Colonic mucosa (tissue), 4 donors: ENCODE measurements at regions of chr21 and their contacts with region 1.

Region 1: GRCh38 chr21:31030367-31031106 is 7.7 kb downstream of the KRTAP19-8 start:
- DNase-seq: no peak
- H3K4me3 ChIP-seq: no peak overlapping the region
- H3K27ac ChIP-seq: no peak overlapping the region
- H3K4me1 ChIP-seq: no peaks in the 10 kb centered on the region
- H3K27me3 ChIP-seq: no peaks in the 10 kb centered on the region
- CTCF ChIP-seq: no peak

Region 2: GRCh38 chr21:30979054-30979453 is 51.5 kb before region 1 on chr21:
- intact Hi-C with region 1: loop called (anchors 10 kb)
- DNase-seq: no peak
- H3K4me3 ChIP-seq: no peak overlapping the region
- H3K27ac ChIP-seq: no peak overlapping the region
- H3K4me1 ChIP-seq: no peaks in the 10 kb centered on the region
- H3K27me3 ChIP-seq: no peaks in the 10 kb centered on the region
- CTCF ChIP-seq: no peak